ENCODE measurements at regions of chr6 and their contacts with region 1.

Region 1: GRCh38 chr6:42043787-42044475 is 6.4 kb upstream of the TAF8 start:
- DNase-seq: peak; percentile 87
- ATAC-seq: peak; percentile 32
- H3K4me3 ChIP-seq: peak overlapping the region in 1 of 5 experiments; percentile 23
- H3K4me3 Mint-ChIP-seq: peak overlapping the region; percentile 69
- H3K27ac ChIP-seq: peak overlapping the region; percentile 26 to 56
- H3K27ac Mint-ChIP-seq: peak overlapping the region; percentile 88
- H3K4me1 ChIP-seq: peaks cover 67 to 80% of the 10 kb centered on the region in 2 donors
- H3K4me1 Mint-ChIP-seq: peaks cover 82% of the 10 kb centered on the region
- H3K27me3 ChIP-seq: no peaks in the 10 kb centered on the region
- H3K27me3 Mint-ChIP-seq: no peaks in the 10 kb centered on the region
- CTCF ChIP-seq: peak; percentile 89

Region 2: DNA sequence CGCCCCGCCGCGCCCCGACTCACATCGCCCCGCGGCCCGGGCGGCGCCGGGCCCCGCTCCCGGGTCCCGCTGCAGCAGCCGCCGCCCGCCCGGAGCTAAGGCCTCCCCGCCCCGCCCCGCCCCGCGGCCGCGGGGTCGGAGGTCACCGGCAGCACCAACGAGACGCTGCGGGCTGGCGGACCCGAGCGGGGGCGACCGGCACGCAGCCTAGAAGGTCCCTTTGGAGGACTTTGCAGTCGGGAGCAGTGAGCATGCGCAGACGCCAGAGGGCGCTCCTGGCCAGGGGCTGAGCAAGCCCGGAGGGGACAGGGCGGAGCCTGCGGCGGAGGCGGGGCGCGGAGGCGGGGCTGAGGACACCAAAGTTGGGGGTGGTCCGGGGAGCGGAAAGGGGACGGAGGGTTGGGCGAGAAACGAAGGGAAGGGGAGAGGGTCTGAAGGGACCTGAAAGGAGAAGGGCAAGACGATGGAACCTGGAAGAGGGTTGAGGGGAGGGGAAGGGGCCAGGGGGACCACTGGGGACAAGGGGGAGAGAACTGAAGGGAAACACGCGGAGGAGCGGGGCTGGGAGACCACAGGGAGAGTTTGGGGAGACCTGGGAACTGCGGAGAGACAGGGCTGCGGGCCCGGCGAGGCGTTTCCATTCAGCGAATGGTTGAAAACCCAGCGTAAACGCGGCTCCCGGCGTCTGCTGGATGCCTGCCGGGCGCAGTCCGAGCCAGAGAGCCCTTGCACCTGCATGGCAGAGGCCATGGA is 264.0 kb before region 1 on chr6 and contains the start of gene FRS3:
- CTCF ChIA-PET with region 1: interaction called, 198 read pairs
- POLR2A ChIA-PET with region 1: interaction called, 5 read pairs
- intact Hi-C with region 1: loop called (anchors 1 kb)
- DNase-seq: peak; percentile 98
- ATAC-seq: peak; percentile 96
- H3K4me3 ChIP-seq: peak within 1 kb of the TSS; percentile 49 to 79 (median 67)
- H3K4me3 Mint-ChIP-seq: peak within 1 kb of the TSS; percentile 96
- H3K27ac ChIP-seq: peak within 1 kb of the TSS in 1 of 2 donors; percentile 25
- H3K27ac Mint-ChIP-seq: peak within 1 kb of the TSS; percentile 77
- H3K4me1 ChIP-seq: peaks cover 20 to 28% of the 10 kb centered on the region in 2 donors
- H3K4me1 Mint-ChIP-seq: peaks cover 28% of the 10 kb centered on the region
- H3K27me3 ChIP-seq: no peaks in the 10 kb centered on the region
- H3K27me3 Mint-ChIP-seq: no peaks in the 10 kb centered on the region
- CTCF ChIP-seq: peak; percentile 79
- total RNA-seq, gene FRS3: 8.6 and 9.8 TPM in 2 replicates

Region 3: GRCh38 chr6:41901882-41902519 is 141.9 kb before region 1 on chr6:
- CTCF ChIA-PET with region 1: interaction called, 14 read pairs
- POLR2A ChIA-PET with region 1: interaction called, 5 read pairs
- intact Hi-C with region 1: loop called (anchors 1 kb)
- DNase-seq: peak; percentile 47
- ATAC-seq: no peak
- H3K4me3 ChIP-seq: no peak overlapping the region
- H3K4me3 Mint-ChIP-seq: no peak overlapping the region
- H3K27ac ChIP-seq: no peak overlapping the region
- H3K27ac Mint-ChIP-seq: no peak overlapping the region
- H3K4me1 ChIP-seq: no peaks in the 10 kb centered on the region
- H3K4me1 Mint-ChIP-seq: no peaks in the 10 kb centered on the region
- H3K27me3 ChIP-seq: no peaks in the 10 kb centered on the region
- H3K27me3 Mint-ChIP-seq: no peaks in the 10 kb centered on the region
- CTCF ChIP-seq: peak; percentile 26

Region 4: GRCh38 chr6:41929924-41930323 is 114.0 kb before region 1 on chr6:
- CTCF ChIA-PET with region 1: interaction called, 263 read pairs
- POLR2A ChIA-PET with region 1: no interaction called
- intact Hi-C with region 1: no loop called
- DNase-seq: no peak
- ATAC-seq: no peak
- H3K4me3 ChIP-seq: no peak overlapping the region
- H3K4me3 Mint-ChIP-seq: no peak overlapping the region
- H3K27ac ChIP-seq: no peak overlapping the region
- H3K27ac Mint-ChIP-seq: peak overlapping the region; percentile 15
- H3K4me1 ChIP-seq: peaks cover 5 to 7% of the 10 kb centered on the region in 2 donors
- H3K4me1 Mint-ChIP-seq: peaks cover 13% of the 10 kb centered on the region
- H3K27me3 ChIP-seq: no peaks in the 10 kb centered on the region
- H3K27me3 Mint-ChIP-seq: no peaks in the 10 kb centered on the region
- CTCF ChIP-seq: no peak

Region 5: DNA sequence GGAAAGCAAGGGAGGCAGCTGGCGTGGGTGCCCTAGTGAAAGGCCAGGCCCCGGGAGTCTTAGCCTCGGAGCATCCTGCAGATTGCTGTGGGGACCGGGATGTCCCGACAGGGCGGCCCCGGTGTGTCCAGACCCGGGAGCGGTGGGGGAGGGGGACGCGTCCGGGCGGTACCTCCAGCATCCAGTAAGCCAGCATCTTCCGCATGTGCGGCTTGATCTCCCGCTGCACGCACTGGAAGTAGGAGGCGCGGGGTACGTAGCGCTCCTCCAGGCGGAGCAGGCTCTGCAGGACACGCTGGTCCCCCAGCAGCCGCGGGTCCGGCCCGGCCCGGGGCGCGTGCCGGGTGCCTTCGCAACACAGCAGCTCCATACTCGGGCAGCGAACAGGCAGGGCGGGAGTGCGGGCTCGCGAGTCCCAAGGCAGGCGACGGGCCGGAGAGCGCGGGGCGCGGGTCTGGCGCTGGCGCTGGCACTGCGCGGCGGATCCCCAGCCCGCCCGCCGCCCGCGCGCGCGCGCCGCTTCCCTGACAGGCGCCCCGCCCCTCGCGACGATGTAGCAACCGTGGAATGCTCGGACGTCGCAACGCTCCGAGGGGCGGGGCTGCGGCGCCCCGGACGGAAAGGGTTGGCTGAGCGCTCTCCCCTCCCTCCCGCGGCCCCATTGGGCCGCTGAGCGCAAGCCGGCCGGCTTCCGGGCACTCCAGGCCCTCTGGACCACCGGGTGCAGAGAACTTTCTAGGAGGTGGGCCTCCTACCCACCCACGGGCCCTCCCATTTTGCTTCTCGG is 102.5 kb before region 1 on chr6 and contains the start of gene CCND3:
- CTCF ChIA-PET with region 1: interaction called, 263 read pairs
- POLR2A ChIA-PET with region 1: interaction called, 4 read pairs
- intact Hi-C with region 1: loop called (anchors 1 kb)
- DNase-seq: peak; percentile 87
- ATAC-seq: peak; percentile 94
- H3K4me3 ChIP-seq: peak within 1 kb of the TSS; percentile 61 to 77 (median 71)
- H3K4me3 Mint-ChIP-seq: peak within 1 kb of the TSS; percentile 85
- H3K27ac ChIP-seq: peak within 1 kb of the TSS; percentile 10 to 68
- H3K27ac Mint-ChIP-seq: peak within 1 kb of the TSS; percentile 87
- H3K4me1 ChIP-seq: peaks cover 51 to 58% of the 10 kb centered on the region in 2 donors
- H3K4me1 Mint-ChIP-seq: peaks cover 52% of the 10 kb centered on the region
- H3K27me3 ChIP-seq: no peaks in the 10 kb centered on the region
- H3K27me3 Mint-ChIP-seq: no peaks in the 10 kb centered on the region
- CTCF ChIP-seq: no peak
- total RNA-seq, gene CCND3: 136 and 145 TPM in 2 replicates